ENCODE measurements at regions of chr2 and their contacts with region 1.

Region 1: GRCh38 chr2:216023055-216023648 is 9.8 kb upstream of the MREG start:
- DNase-seq: peak; percentile 40
- H3K4me3 ChIP-seq: no peak overlapping the region
- H3K27ac ChIP-seq: no peak overlapping the region
- H3K4me1 ChIP-seq: no peaks in the 10 kb centered on the region
- H3K27me3 ChIP-seq: no peaks in the 10 kb centered on the region
- CTCF ChIP-seq: peak; percentile 80 to 81

Region 2: GRCh38 chr2:215949991-215950404 is 73.2 kb before region 1 on chr2:
- CTCF ChIA-PET with region 1: interaction called, 7 read pairs
- dilution Hi-C with region 1: no loop called
- in situ Hi-C with region 1: loop called (anchors 5 kb)
- intact Hi-C with region 1: loop called (anchors 1 kb)
- DNase-seq: peak; percentile 60
- H3K4me3 ChIP-seq: no peak overlapping the region
- H3K27ac ChIP-seq: no peak overlapping the region
- H3K4me1 ChIP-seq: no peaks in the 10 kb centered on the region
- H3K27me3 ChIP-seq: no peaks in the 10 kb centered on the region
- CTCF ChIP-seq: peak; percentile 62 to 70

Measured in mammary epithelial cell (primary cell).